Activated CD8-positive, alpha-beta T cell treated with anti-CD3 and anti-CD28 coated beads for 36 hours (primary cell): ENCODE measurements at regions of chr9 and their contacts with region 1.

Region 1: DNA sequence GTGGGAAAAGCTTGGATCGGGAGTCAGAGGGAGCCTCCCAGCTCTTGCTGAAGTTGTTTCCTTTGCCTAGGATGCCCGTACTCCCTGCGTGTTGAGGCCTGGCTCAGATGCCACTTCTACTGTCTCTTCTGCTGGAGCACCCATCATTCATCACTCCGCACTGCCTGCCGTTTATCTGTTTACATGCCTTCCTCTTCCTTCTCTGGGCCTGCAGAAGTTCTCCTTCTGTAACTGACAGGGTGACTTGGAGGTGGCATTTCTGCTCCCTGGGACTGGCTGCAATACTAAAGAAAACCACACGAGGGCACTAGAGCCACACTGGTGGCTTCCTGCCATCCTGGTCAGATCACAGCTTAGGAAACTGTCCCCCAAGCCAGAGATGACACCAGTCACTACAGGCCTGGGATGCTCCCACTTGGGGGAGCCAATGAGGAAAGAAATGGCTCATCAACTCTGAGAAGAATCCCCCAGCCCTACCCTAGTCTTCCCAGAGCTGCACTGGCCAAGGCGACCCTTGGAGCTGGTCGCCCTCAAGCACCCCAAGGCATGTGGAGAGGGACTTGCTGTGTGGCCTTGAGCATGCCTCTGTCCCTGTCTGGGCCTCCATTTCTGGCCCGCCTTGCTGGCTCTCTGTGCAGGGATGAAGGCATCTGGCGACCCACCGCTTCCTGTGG is 9.7 kb upstream of the SLC25A51 start:
- DNase-seq: peak; percentile 86
- ATAC-seq: peak; percentile 91
- H3K4me3 Mint-ChIP-seq: no peak overlapping the region
- H3K27ac Mint-ChIP-seq: no peak overlapping the region
- H3K4me1 Mint-ChIP-seq: no peaks in the 10 kb centered on the region
- H3K27me3 Mint-ChIP-seq: no peaks in the 10 kb centered on the region
- CTCF ChIP-seq: peak; percentile 93

Region 2: GRCh38 chr9:38026021-38026809 is 112.6 kb after region 1 on chr9:
- CTCF ChIA-PET with region 1: interaction called, 8 read pairs
- POLR2A ChIA-PET with region 1: no interaction called
- intact Hi-C with region 1: loop called (anchors 10 kb)
- DNase-seq: no peak
- ATAC-seq: no peak
- H3K4me3 Mint-ChIP-seq: no peak overlapping the region
- H3K27ac Mint-ChIP-seq: no peak overlapping the region
- H3K4me1 Mint-ChIP-seq: peaks cover 8% of the 10 kb centered on the region
- H3K27me3 Mint-ChIP-seq: no peaks in the 10 kb centered on the region
- CTCF ChIP-seq: no peak

Region 3: GRCh38 chr9:38068866-38069629 is 155.4 kb after region 1 on chr9 and contains the start of gene SHB:
- CTCF ChIA-PET with region 1: interaction called, 14 read pairs
- POLR2A ChIA-PET with region 1: no interaction called
- intact Hi-C with region 1: no loop called
- DNase-seq: peak; percentile 82
- ATAC-seq: peak; percentile 79
- H3K4me3 Mint-ChIP-seq: peak within 1 kb of the TSS; percentile 79
- H3K27ac Mint-ChIP-seq: no peak within 1 kb of the TSS
- H3K4me1 Mint-ChIP-seq: peaks cover 29% of the 10 kb centered on the region
- H3K27me3 Mint-ChIP-seq: peaks cover 4% of the 10 kb centered on the region
- CTCF ChIP-seq: peak; percentile 20
- total RNA-seq, gene SHB: 2.8 to 3.2 TPM

Region 4: DNA sequence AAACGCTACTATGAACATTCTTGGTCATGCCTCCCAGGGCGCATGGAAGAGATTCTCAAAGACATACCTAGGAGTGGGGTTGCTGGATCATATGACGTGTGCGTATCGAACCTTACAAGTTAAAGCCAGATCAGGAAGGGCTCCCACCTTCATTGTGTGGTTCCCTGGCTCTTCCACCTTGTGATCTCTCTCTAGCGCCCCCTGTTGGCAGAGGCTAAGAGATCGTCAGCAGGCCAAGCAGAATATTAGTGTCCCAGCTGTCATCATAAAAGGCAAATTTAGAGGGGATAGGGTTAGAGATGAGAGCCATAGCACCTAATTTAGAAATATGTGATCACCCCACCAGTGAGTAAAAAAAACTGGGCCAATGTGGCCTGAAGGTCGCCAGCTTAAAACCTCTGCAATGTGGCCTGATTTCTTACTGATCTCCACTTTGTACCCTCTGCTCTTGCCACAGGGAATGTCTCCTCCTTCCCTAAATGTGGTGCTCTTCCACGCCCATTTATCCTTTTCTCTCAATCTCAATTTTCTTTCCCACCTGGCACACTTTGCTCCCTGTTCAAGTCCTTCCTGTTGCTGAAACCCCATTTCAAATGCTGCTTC is 247.1 kb after region 1 on chr9:
- CTCF ChIA-PET with region 1: interaction called, 60 read pairs
- POLR2A ChIA-PET with region 1: interaction called, 3 read pairs
- intact Hi-C with region 1: loop called (anchors 2 kb)
- DNase-seq: peak; percentile 78
- ATAC-seq: peak; percentile 56
- H3K4me3 Mint-ChIP-seq: no peak overlapping the region
- H3K27ac Mint-ChIP-seq: no peak overlapping the region
- H3K4me1 Mint-ChIP-seq: peaks cover 2% of the 10 kb centered on the region
- H3K27me3 Mint-ChIP-seq: no peaks in the 10 kb centered on the region
- CTCF ChIP-seq: peak; percentile 93

Region 5: DNA sequence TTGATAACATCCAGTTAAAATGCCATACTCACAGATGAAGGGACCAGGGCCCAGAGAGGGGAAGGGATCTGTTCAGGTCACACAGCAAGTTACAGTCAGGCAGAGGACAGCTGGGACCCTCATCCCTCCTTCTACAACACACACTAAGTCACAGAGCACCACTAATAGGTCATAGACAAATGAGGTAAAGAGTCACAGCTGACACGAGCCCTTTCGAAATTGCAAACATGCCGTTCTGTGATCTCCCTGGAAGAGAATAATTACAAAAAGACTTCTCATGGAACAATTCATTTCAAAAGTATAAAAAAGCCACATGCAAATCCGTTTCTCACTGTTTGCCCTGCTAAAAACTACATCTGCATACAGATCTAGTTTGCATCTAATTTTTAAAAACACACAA is 495.1 kb after region 1 on chr9:
- CTCF ChIA-PET with region 1: no interaction called
- POLR2A ChIA-PET with region 1: no interaction called
- intact Hi-C with region 1: loop called (anchors 10 kb)
- DNase-seq: no peak
- ATAC-seq: no peak
- H3K4me3 Mint-ChIP-seq: no peak overlapping the region
- H3K27ac Mint-ChIP-seq: no peak overlapping the region
- H3K4me1 Mint-ChIP-seq: no peaks in the 10 kb centered on the region
- H3K27me3 Mint-ChIP-seq: peaks cover 10% of the 10 kb centered on the region
- CTCF ChIP-seq: no peak